Activated naive CD4-positive, alpha-beta T cell treated with anti-CD3 and anti-CD28 coated beads for 36 hours (primary cell): ENCODE measurements at regions of chr12 and their contacts with region 1.

Region 1: DNA sequence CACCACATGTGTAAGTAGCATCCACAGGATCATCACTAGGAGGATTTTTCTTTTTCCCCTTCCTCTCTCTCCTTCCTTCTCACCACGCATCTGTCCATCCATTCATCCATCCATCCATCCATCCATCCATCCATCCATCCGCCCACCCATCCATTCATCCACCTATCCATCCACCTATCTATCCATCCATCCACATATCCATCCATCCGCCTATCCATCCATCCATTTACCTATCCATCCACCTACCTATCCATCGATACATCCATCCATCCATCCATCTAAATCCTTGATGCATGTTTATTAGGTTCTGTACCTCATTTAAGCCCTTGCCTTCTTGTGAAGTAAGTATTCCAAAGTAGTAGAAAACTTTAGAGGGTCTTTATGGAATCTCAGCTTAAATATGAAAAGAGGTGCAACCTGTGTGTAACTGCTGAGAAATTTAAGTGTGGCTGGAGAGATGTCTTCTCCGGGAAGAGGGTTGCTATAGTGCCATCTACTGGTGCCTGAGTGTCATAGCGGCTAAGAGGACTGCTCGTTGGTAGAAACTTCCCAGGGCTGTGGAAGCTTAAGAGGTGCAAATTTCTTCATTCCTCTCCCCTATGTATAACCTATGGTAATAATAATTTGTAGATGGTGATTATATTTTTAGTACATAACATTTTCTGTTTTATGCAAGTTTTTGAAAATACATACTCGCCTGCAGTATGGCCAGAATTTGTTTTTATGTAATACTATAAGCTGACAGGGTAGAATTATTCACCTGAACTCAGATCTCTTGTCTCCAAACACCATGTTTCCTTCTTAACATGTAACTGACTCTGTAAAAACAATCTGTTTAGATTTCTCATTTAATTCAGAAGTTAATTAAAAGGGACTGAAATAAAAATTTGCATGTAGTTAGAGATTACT is 46.0 kb downstream of the MYO1H start:
- DNase-seq: peak; percentile 60
- H3K4me3 Mint-ChIP-seq: no peak overlapping the region
- H3K27ac Mint-ChIP-seq: no peak overlapping the region
- H3K4me1 Mint-ChIP-seq: peaks cover 2% of the 10 kb centered on the region
- H3K27me3 Mint-ChIP-seq: peaks cover 26% of the 10 kb centered on the region

Region 2: GRCh38 chr12:109264095-109264942 is 129.4 kb before region 1 on chr12:
- CTCF ChIA-PET with region 1: interaction called, 9 read pairs
- intact Hi-C with region 1: loop called (anchors 2 kb)
- DNase-seq: peak; percentile 69
- H3K4me3 Mint-ChIP-seq: no peak overlapping the region
- H3K27ac Mint-ChIP-seq: no peak overlapping the region
- H3K4me1 Mint-ChIP-seq: no peaks in the 10 kb centered on the region
- H3K27me3 Mint-ChIP-seq: no peaks in the 10 kb centered on the region

Region 3: GRCh38 chr12:109346920-109347319 is 46.8 kb before region 1 on chr12:
- CTCF ChIA-PET with region 1: interaction called, 3 read pairs
- intact Hi-C with region 1: loop called (anchors 2 kb)
- DNase-seq: peak; percentile 26
- H3K4me3 Mint-ChIP-seq: no peak overlapping the region
- H3K27ac Mint-ChIP-seq: no peak overlapping the region
- H3K4me1 Mint-ChIP-seq: no peaks in the 10 kb centered on the region
- H3K27me3 Mint-ChIP-seq: peaks cover 9% of the 10 kb centered on the region